ENCODE measurements at regions of chr9 and their contacts with region 1.

Region 1: DNA sequence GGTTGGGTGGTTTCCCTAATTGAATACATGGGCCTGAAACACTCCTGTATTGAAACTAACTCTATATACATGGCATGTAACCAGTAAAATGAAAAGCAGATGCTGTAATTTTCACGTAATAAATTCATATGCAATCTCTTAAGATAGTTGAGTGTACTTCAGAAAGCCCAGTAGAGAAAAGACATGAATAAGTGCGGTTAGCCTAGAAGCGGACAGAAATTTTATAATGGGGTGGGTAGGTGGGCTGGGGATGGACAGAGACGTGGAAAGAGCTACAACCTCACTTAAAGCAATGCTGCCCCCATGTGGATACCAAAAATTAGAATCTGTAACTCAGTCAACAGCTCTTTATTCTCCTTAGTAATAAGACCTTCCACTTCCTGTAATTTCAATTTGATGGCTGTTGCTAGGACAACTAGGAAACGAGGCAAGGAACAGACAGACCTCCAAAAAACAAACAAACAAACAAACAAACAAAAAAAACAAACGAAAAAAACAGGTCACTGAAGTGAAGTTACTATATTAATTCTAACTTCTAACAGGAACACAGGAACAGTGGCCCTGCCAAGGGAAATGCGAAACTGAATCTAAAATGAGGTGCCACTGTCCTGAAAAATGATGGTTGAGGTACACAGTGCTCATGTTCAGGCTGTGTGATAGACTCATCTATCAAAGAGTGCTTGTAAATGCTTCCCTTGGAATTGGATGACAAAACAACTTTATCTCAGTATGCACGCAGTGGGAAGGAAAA is 103.4 kb upstream of the GNA14 start:
- DNase-seq: peak; percentile 28 to 38
- H3K4me3 ChIP-seq: no peak overlapping the region
- H3K27ac ChIP-seq: no peak overlapping the region
- H3K4me1 ChIP-seq: no peaks in the 10 kb centered on the region; the same call in 1 of the 2 replicates
- H3K27me3 ChIP-seq: no peaks in the 10 kb centered on the region
- CTCF ChIP-seq: peak; percentile 77

Region 2: GRCh38 chr9:77177161-77177893 is 574.2 kb before region 1 on chr9 and contains the start of gene VPS13A:
- CTCF ChIA-PET with region 1: no interaction called
- POLR2A ChIA-PET with region 1: no interaction called
- intact Hi-C with region 1: no loop called
- DNase-seq: peak; percentile 84 to 97
- H3K4me3 ChIP-seq: peak within 1 kb of the TSS; percentile 76
- H3K27ac ChIP-seq: peak within 1 kb of the TSS; percentile 44
- H3K4me1 ChIP-seq: peaks cover 31% of the 10 kb centered on the region
- H3K27me3 ChIP-seq: no peaks in the 10 kb centered on the region
- CTCF ChIP-seq: no peak; the same call in 1 of the 2 replicates
- total RNA-seq, gene VPS13A: 37.4 and 53.9 TPM in 2 replicates

Region 3: DNA sequence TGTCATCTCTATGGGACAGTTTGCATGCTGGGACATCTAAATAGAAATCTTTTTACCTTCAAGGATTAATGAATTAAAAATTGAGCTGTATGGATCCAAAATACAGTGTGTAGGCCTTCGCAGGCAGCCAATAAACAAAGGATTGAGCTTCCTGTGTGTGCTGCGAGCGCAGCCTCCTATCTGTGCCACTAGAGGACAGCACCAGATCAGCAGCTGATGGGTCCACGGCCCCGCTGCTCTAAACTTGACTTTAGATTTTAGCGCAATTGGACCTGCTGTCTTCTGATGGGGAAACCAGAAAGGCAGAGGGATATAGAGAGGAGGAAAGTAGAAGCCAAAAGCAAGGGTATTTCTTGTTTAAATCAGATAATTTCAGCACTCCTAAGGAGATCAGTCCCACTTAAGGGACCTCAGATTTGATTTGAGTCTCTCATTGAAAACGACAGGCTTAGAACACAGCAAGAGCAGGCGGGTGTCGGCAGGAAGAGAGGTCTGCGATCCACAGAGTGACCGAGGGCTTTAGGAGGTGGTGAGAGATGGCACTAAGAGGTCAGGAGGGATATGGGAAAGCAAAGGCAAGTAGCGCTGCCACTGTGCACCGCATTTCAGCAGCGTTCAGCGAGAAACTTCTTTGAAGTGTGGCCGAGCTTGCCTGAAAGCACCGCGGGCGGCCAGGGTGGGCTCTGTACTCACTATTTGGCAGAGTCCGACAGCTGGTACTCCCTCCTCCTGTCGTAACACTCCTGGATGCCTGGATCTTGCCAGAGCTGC is 317.7 kb before region 1 on chr9:
- CTCF ChIA-PET with region 1: interaction called, 17 read pairs
- POLR2A ChIA-PET with region 1: interaction called, 10 read pairs
- intact Hi-C with region 1: loop called (anchors 1 kb)
- DNase-seq: peak in 1 of 2 experiments; percentile 51
- H3K4me3 ChIP-seq: no peak overlapping the region
- H3K27ac ChIP-seq: no peak overlapping the region
- H3K4me1 ChIP-seq: no peaks in the 10 kb centered on the region
- H3K27me3 ChIP-seq: no peaks in the 10 kb centered on the region
- CTCF ChIP-seq: peak; percentile 92

Region 4: GRCh38 chr9:77588271-77588937 is 163.1 kb before region 1 on chr9:
- CTCF ChIA-PET with region 1: no interaction called
- POLR2A ChIA-PET with region 1: no interaction called
- intact Hi-C with region 1: loop called (anchors 5 kb)
- DNase-seq: peak; percentile 31 to 89
- H3K4me3 ChIP-seq: peak overlapping the region; percentile 45; the same call in 1 of the 2 replicates
- H3K27ac ChIP-seq: peak overlapping the region; percentile 96
- H3K4me1 ChIP-seq: peaks cover 50% of the 10 kb centered on the region
- H3K27me3 ChIP-seq: no peaks in the 10 kb centered on the region
- CTCF ChIP-seq: no peak

Region 5: GRCh38 chr9:77648234-77649120 is 103.0 kb before region 1 on chr9 and contains the start of gene GNA14:
- CTCF ChIA-PET with region 1: interaction called, 6 read pairs
- POLR2A ChIA-PET with region 1: no interaction called
- intact Hi-C with region 1: loop called (anchors 1 kb)
- DNase-seq: peak in 1 of 2 experiments; percentile 70
- H3K4me3 ChIP-seq: no peak within 1 kb of the TSS
- H3K27ac ChIP-seq: no peak within 1 kb of the TSS
- H3K4me1 ChIP-seq: no peaks in the 10 kb centered on the region
- H3K27me3 ChIP-seq: no peaks in the 10 kb centered on the region
- CTCF ChIP-seq: no peak
- total RNA-seq, gene GNA14: 1.1 and 1.3 TPM in 2 replicates

Region 6: GRCh38 chr9:77841739-77842386 is 90.3 kb after region 1 on chr9:
- CTCF ChIA-PET with region 1: no interaction called
- POLR2A ChIA-PET with region 1: no interaction called
- intact Hi-C with region 1: loop called (anchors 5 kb)
- DNase-seq: no peak
- H3K4me3 ChIP-seq: no peak overlapping the region
- H3K27ac ChIP-seq: no peak overlapping the region
- H3K4me1 ChIP-seq: peaks cover 22% of the 10 kb centered on the region
- H3K27me3 ChIP-seq: no peaks in the 10 kb centered on the region
- CTCF ChIP-seq: peak; percentile 45

Region 7: GRCh38 chr9:77896938-77897667 is 145.6 kb after region 1 on chr9:
- CTCF ChIA-PET with region 1: no interaction called
- POLR2A ChIA-PET with region 1: no interaction called
- intact Hi-C with region 1: no loop called
- DNase-seq: no peak
- H3K4me3 ChIP-seq: no peak overlapping the region
- H3K27ac ChIP-seq: no peak overlapping the region
- H3K4me1 ChIP-seq: 0 out of 2 replicates have a peak, but pooled peaks cover 11% of the 10 kb centered on the region
- H3K27me3 ChIP-seq: no peaks in the 10 kb centered on the region
- CTCF ChIP-seq: no peak